K562 (cell line): ENCODE measurements at regions of chr20 and their contacts with region 1.

Region 1: DNA sequence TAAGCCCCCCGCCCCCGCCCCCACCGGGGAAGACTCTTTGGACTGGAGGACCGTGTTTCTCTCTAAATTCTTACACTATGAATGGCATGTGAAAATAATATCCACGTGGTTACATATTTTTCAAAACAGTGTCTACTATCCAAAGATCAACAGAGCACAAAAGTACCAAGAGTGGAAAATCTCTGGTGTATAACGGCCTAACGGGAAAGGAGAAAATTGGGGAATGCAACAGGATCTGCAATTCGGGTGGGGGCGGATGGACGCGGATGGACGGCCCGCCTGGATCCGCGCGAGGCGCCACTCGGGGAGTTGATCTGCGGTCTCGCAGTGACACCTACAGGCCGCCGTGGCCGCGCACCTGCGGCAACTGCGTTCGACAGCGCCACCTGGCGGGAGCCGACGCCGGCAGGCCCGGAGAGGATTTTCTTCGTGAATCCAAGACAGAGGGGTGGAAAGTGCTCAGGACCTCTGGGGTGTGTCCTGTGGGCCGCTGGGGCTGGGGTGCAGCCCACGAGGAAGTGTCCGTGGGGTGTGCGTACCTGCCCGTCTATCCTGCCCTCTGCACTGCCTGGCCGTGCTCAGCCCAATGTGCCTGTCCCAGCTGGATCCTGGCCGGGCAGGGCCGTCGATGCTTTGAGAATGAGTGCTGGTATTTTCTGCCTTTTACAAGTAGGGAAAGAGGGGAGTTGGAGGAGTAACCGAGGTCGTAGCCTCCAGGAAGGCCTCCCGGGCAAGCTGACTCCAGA is 18.6 kb downstream of the ANKRD60 start:
- DNase-seq: peak; percentile 86 to 94 (median 92)
- ATAC-seq: peak; percentile 96
- H3K4me3 ChIP-seq: no peak overlapping the region
- H3K27ac ChIP-seq: no peak overlapping the region
- H3K4me1 ChIP-seq: peaks cover 0 to 6% of the 10 kb centered on the region in 2 experiments; a peak in 1 of 5 replicates
- H3K27me3 ChIP-seq: peaks cover 26 to 63% of the 10 kb centered on the region in 2 experiments
- CTCF ChIP-seq: peak; percentile 100
- EP300 ChIP-seq: peak; percentile 29; the same call in 1 of the 2 replicates
- POLR2A ChIP-seq: no peak
- RAD21 ChIP-seq: peak; percentile 96 to 99

Region 2: GRCh38 chr20:57391074-57391554 is 818.7 kb before region 1 on chr20 and contains the start of gene RBM38:
- CTCF ChIA-PET with region 1: no interaction called
- POLR2A ChIA-PET with region 1: no interaction called
- in situ Hi-C with region 1: loop called (anchors 25 kb)
- intact Hi-C with region 1: no loop called
- DNase-seq: peak; percentile 89 to 96 (median 92)
- ATAC-seq: peak; percentile 76
- H3K4me3 ChIP-seq: peak within 1 kb of the TSS; percentile 75
- H3K27ac ChIP-seq: peak within 1 kb of the TSS; percentile 95
- H3K4me1 ChIP-seq: peaks cover 34 to 68% of the 10 kb centered on the region in 2 experiments
- H3K27me3 ChIP-seq: no peaks in the 10 kb centered on the region
- CTCF ChIP-seq: no peak
- EP300 ChIP-seq: no peak
- POLR2A ChIP-seq: peak; percentile 76
- RAD21 ChIP-seq: no peak
- polyA plus RNA-seq, gene RBM38: 0.28 to 0.39 TPM

Region 3: GRCh38 chr20:57526087-57526884 is 683.5 kb before region 1 on chr20:
- CTCF ChIA-PET with region 1: interaction called, 10 read pairs
- POLR2A ChIA-PET with region 1: no interaction called
- in situ Hi-C with region 1: loop called (anchors 10 kb)
- intact Hi-C with region 1: loop called (anchors 1 kb)
- DNase-seq: peak; percentile 70 to 95 (median 77)
- ATAC-seq: peak; percentile 60
- H3K4me3 ChIP-seq: peak overlapping the region; percentile 26
- H3K27ac ChIP-seq: peak overlapping the region; percentile 93; the same call in 1 of the 3 replicates
- H3K4me1 ChIP-seq: peaks cover 22 to 32% of the 10 kb centered on the region in 2 experiments; a peak in 4 of 5 replicates
- H3K27me3 ChIP-seq: no peaks in the 10 kb centered on the region
- CTCF ChIP-seq: peak; percentile 59 to 98 (median 86)
- EP300 ChIP-seq: no peak; the same call in none of the 2 replicates
- POLR2A ChIP-seq: no peak
- RAD21 ChIP-seq: peak in 1 of 2 experiments; percentile 17; a peak in 1 of 4 replicates

Region 4: DNA sequence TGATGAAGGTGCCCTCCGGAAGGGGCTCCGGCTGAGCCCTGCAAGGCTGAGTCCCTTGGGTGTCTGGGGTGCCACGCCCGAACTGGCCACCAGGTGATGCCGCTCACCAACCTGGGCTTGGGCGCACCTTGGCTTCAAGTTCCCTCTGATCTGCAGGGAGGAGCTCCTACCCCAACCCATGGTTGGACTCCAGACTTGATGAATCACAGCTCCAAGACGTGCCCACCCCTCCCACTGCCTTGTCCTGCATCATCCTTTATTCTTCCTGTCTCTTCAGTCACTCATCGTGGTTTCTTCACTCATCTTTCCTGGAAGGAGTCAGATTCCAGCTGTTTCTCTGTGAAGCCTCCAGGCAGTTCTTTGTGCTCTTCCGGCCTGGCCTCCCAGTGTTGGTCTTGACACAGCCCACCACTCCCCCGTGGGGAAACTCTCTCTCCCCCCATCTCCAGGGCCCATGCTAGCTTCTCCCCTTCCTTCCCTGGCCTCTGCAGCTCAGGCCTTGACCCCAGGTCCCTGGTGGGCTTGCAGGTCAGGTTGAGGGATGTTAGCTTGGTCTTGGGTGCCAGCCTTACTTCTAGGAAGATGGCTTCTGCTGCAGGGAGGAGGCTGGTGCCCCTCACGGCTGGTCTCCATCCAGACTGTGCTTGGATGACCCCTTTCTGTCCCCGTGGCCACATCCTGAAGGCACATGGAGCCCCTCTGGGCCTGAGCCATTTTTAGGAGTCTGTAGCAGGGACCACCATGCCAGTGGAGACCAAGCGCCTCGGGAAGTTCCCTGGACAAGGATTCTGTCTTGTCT is 587.0 kb before region 1 on chr20:
- CTCF ChIA-PET with region 1: interaction called, 6 read pairs
- POLR2A ChIA-PET with region 1: interaction called, 3 read pairs
- in situ Hi-C with region 1: loop called (anchors 25 kb)
- intact Hi-C with region 1: no loop called
- DNase-seq: peak; percentile 38 to 66 (median 52)
- ATAC-seq: peak; percentile 87
- H3K4me3 ChIP-seq: no peak overlapping the region
- H3K27ac ChIP-seq: no peak overlapping the region
- H3K4me1 ChIP-seq: peaks cover 0 to 3% of the 10 kb centered on the region in 2 experiments; a peak in 4 of 5 replicates
- H3K27me3 ChIP-seq: peaks cover 24 to 60% of the 10 kb centered on the region in 2 experiments; a peak in 4 of 5 replicates
- CTCF ChIP-seq: peak; percentile 56 to 71 (median 64)
- EP300 ChIP-seq: no peak
- POLR2A ChIP-seq: no peak
- RAD21 ChIP-seq: peak in 1 of 2 experiments; percentile 59; a peak in 3 of 4 replicates

Region 5: GRCh38 chr20:58102260-58102659 is 107.6 kb before region 1 on chr20:
- CTCF ChIA-PET with region 1: no interaction called
- POLR2A ChIA-PET with region 1: no interaction called
- in situ Hi-C with region 1: no loop called
- intact Hi-C with region 1: no loop called
- DNase-seq: no peak
- ATAC-seq: no peak
- H3K4me3 ChIP-seq: no peak overlapping the region
- H3K27ac ChIP-seq: no peak overlapping the region
- H3K4me1 ChIP-seq: no peaks in the 10 kb centered on the region
- H3K27me3 ChIP-seq: peaks cover 2 to 32% of the 10 kb centered on the region in 2 experiments; a peak in 4 of 5 replicates
- CTCF ChIP-seq: no peak
- EP300 ChIP-seq: no peak
- POLR2A ChIP-seq: no peak
- RAD21 ChIP-seq: no peak

Region 6: DNA sequence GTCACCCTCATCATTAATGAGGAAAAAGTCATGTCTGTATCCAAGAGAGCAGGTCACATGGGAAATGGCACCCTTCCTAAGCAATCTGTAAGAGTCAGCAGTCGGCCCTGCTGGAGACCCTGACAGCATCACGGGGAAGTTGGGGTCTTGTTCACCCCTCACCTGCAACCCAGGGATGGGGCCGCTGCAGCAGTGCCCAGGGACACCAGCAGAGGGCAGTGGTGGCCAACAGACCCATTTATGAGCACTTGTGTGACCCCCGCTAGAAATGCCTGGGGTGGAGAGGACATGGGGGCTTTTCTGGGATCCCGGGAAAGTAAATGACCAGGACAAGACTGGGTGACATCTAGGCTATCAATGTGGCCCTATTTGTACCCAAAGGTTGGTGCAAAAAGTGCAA is 17.3 kb before region 1 on chr20:
- CTCF ChIA-PET with region 1: interaction called, 34 read pairs
- POLR2A ChIA-PET with region 1: interaction called, 3 read pairs
- in situ Hi-C with region 1: no loop called
- intact Hi-C with region 1: no loop called
- DNase-seq: peak; percentile 30 to 50 (median 48)
- ATAC-seq: peak; percentile 78
- H3K4me3 ChIP-seq: no peak overlapping the region
- H3K27ac ChIP-seq: no peak overlapping the region
- H3K4me1 ChIP-seq: peaks cover 0 to 3% of the 10 kb centered on the region in 2 experiments; a peak in 1 of 5 replicates
- H3K27me3 ChIP-seq: peaks cover 6 to 17% of the 10 kb centered on the region in 2 experiments; a peak in 4 of 5 replicates
- CTCF ChIP-seq: peak; percentile 68 to 84 (median 78)
- EP300 ChIP-seq: no peak
- POLR2A ChIP-seq: no peak
- RAD21 ChIP-seq: peak in 1 of 2 experiments; percentile 63; a peak in 2 of 4 replicates